Dendritic cell treated with granulocyte-macrophage colony-stimulating factor and Interleukin-4, amounts not matched to agents 40 ng/mL and 50 ng/mL, for 4 days (primary cell): ENCODE measurements at regions of chr19 and their contacts with region 1.

Region 1: DNA sequence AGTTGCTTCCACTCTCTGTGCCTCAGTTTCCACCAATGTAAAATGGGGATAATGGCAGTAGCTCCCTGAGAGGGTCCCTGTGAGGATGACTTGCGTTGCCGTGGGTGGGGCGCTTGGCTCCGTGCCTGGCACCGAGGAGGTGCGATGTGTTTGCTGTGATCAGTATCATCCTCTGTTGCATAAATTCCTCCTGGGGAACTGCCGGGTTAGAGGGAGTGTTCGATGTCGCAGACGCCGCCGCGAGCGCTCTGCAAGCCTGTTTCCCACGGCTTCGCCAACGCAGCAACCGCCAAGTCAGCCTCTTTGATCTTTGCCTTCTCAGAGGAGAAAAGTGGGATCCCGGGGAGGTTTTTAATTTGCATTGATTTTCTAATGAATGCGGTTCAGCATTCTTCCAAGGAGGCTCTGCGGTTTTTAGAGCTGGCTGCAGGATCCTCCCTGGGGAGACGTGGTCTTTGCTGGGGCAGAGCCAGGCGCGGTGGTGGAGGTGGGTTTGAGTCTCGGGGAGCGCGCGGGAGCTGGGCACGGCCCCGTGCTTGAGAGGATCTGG is 7.6 kb downstream of the GPR32 start:
- H3K4me3 Mint-ChIP-seq: no peak overlapping the region
- H3K27ac Mint-ChIP-seq: no peak overlapping the region
- H3K4me1 Mint-ChIP-seq: peaks cover 6% of the 10 kb centered on the region
- H3K27me3 Mint-ChIP-seq: peaks cover 80% of the 10 kb centered on the region

Region 2: GRCh38 chr19:50537762-50538230 is 240.0 kb before region 1 on chr19:
- intact Hi-C with region 1: loop called (anchors 1 kb)
- H3K4me3 Mint-ChIP-seq: no peak overlapping the region
- H3K27ac Mint-ChIP-seq: no peak overlapping the region
- H3K4me1 Mint-ChIP-seq: no peaks in the 10 kb centered on the region
- H3K27me3 Mint-ChIP-seq: peaks cover 11% of the 10 kb centered on the region

Region 3: DNA sequence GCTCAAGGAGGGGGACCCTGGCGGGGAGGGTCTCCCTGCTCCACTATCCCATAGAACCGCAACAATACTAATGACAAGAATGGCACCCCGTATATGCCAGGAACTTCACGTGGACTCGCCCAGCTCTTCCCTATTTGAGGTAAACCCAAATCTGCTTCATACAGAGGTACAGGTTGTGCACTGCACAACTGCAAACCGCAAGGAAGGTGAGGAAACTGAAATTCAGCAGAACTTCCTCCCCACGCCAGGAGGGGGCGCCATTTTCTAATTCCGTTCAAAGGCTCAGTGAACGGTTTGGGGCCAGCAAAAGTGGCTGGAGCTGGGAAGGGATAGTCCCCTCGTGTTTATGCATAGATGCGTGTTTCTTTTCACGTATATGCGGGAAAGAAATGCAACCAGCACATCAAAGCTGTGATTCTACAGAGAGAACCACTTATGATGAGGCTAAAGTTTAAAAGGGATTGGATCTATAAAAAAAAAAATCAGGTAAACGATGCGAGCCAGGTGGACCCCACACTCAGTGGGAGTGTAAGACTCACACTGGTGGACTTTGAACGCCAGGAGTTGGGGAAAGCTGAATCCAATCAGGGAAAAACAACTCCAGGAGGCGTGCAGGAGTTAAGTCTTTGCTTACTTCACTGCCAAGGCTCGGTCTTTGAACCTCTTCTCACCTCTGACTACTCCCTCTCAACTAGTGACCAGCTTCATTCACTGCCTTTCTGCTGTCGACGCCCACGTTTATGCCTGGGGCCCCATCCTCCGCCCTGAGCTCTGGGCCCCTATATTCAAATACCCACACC is 108.3 kb before region 1 on chr19:
- intact Hi-C with region 1: loop called (anchors 1 kb)
- H3K4me3 Mint-ChIP-seq: no peak overlapping the region
- H3K27ac Mint-ChIP-seq: no peak overlapping the region
- H3K4me1 Mint-ChIP-seq: no peaks in the 10 kb centered on the region
- H3K27me3 Mint-ChIP-seq: peaks cover 79% of the 10 kb centered on the region

Region 4: GRCh38 chr19:50705422-50706019 is 72.3 kb before region 1 on chr19:
- intact Hi-C with region 1: loop called (anchors 1 kb)
- H3K4me3 Mint-ChIP-seq: no peak overlapping the region
- H3K27ac Mint-ChIP-seq: no peak overlapping the region
- H3K4me1 Mint-ChIP-seq: peaks cover 6% of the 10 kb centered on the region
- H3K27me3 Mint-ChIP-seq: peaks cover 31% of the 10 kb centered on the region

Region 5: GRCh38 chr19:50896591-50897190 is 118.9 kb after region 1 on chr19:
- intact Hi-C with region 1: no loop called
- H3K4me3 Mint-ChIP-seq: no peak overlapping the region
- H3K27ac Mint-ChIP-seq: no peak overlapping the region
- H3K4me1 Mint-ChIP-seq: no peaks in the 10 kb centered on the region
- H3K27me3 Mint-ChIP-seq: peaks cover 13% of the 10 kb centered on the region